Activated CD8-positive, alpha-beta T cell treated with anti-CD3 and anti-CD28 coated beads, Interleukin-2, amount 10 ng/mL, durations not matched to agents 7 days and 5 days (primary cell): ENCODE measurements at regions of chr17 and their contacts with region 1.

Region 1: DNA sequence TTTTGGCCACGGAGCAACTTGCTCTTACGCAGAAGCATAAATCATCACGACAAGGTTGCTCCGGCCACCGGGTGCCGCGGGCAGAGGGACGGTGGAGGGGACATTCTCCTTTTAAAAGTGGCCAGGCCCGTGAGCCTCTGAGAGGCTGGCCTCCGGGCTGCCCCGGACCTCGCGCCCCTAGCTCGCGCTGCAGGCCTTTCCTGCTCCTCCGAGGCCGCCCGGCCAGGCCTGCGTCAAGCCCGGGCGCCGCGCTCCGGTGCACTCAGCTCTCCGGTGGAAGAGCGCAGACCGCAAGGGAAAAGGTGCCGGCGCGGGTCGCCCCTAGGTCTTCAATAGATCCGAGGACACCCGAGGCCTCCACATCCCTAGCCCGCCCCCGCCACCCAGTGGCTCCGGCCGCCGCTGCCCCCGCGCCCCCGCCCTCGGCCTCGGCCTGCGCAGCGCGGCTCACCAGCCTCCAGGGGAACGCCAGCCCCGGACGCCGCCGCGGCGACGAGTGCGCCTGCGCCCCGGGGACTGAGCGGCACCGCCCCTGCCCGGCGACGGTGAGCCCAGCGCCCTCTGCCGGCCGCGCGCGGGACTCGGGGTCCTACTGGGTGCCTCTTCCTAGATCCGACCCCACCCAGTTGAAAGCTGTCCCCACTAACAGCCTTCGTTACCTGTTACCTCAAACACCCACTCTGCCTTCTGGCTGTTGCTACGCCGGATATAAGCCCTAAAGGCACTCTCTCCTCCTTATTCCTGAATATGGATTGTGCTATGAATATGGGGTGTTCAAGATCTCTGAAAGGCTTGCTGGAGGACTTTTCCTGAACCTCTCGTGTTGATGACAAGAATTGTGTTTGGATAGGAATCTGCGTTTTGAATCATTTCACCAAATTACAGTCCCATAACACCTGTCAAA is at the start of gene LYRM9:
- DNase-seq: peak; percentile 93
- ATAC-seq: peak; percentile 99
- H3K4me3 Mint-ChIP-seq: peak within 1 kb of the TSS; percentile 77
- H3K27ac Mint-ChIP-seq: peak within 1 kb of the TSS; percentile 49
- H3K4me1 Mint-ChIP-seq: peaks cover 23% of the 10 kb centered on the region
- H3K27me3 Mint-ChIP-seq: peaks cover 22% of the 10 kb centered on the region
- total RNA-seq, gene LYRM9: 1.6 to 3.6 TPM

Region 2: DNA sequence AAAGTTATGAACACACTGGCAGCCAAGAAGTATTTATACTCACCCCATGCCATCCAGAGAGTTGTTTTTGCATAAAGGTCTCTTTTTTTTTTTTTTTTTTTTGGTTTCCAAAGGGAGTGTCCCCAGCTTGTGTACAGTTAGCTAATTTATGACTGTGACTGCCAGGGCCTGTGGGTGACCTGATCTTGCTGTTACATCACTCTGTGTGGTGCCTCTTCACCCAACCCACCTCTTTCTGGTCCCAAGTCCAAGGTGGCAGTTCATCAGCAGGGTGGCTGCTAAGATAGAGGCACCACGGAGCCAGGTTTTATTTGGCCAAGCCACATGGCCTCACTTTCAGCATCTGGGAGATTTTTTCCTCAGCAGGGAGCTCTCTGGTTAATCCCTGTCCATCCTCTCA is 92.6 kb before region 1 on chr17 and contains the start of gene NOS2:
- CTCF ChIA-PET with region 1: interaction called, 198 read pairs
- POLR2A ChIA-PET with region 1: interaction called, 37 read pairs
- DNase-seq: no peak
- ATAC-seq: no peak
- H3K4me3 Mint-ChIP-seq: no peak within 1 kb of the TSS
- H3K27ac Mint-ChIP-seq: no peak within 1 kb of the TSS
- H3K4me1 Mint-ChIP-seq: peaks cover 3% of the 10 kb centered on the region
- H3K27me3 Mint-ChIP-seq: peaks cover 19% of the 10 kb centered on the region
- total RNA-seq, gene NOS2: not detected

Region 3: GRCh38 chr17:27985306-27985705 is 92.2 kb after region 1 on chr17:
- CTCF ChIA-PET with region 1: no interaction called
- POLR2A ChIA-PET with region 1: no interaction called
- DNase-seq: no peak
- ATAC-seq: no peak
- H3K4me3 Mint-ChIP-seq: no peak overlapping the region
- H3K27ac Mint-ChIP-seq: no peak overlapping the region
- H3K4me1 Mint-ChIP-seq: no peaks in the 10 kb centered on the region
- H3K27me3 Mint-ChIP-seq: peaks cover 20% of the 10 kb centered on the region

Region 4: DNA sequence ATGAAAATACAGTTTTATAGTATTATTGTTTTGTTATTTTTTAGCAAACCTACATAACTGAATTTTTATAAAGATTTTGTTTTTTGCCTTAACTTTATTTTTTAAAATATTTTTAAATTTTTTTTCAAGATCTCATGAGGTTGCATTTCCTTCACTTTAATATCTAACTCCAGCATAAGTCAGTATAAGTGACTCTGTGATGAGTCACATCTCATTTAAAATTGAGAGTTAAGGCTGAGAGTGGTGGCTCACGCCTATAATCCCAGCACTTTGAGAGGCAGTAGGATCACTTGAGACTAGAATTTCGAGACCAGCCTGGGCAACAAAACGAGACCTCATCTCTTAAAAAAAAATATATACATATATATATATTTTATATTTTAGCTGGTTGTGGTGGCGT is 193.4 kb after region 1 on chr17:
- CTCF ChIA-PET with region 1: no interaction called
- POLR2A ChIA-PET with region 1: no interaction called
- DNase-seq: no peak
- ATAC-seq: no peak
- H3K4me3 Mint-ChIP-seq: no peak overlapping the region
- H3K27ac Mint-ChIP-seq: no peak overlapping the region
- H3K4me1 Mint-ChIP-seq: no peaks in the 10 kb centered on the region
- H3K27me3 Mint-ChIP-seq: no peaks in the 10 kb centered on the region

Region 5: DNA sequence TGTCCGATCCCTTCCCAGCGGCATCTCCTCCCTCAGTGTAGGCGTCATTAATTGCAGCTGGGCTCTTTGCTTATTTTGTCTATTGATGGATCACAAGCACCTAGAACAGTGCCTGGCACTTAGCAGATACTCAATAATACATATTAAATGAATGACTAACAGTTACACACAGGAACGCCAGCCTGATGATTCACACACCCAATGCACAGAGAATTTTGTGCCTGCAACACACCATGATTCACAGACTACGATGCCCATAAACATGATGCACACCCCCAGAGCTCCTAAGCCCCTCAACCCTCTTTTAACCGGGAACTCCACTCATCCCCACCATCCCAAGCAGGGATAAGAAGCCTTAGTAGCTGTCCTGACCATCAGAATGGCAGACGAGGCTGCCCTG is 359.3 kb after region 1 on chr17:
- CTCF ChIA-PET with region 1: interaction called, 12 read pairs
- POLR2A ChIA-PET with region 1: no interaction called
- DNase-seq: no peak
- ATAC-seq: no peak
- H3K4me3 Mint-ChIP-seq: no peak overlapping the region
- H3K27ac Mint-ChIP-seq: no peak overlapping the region
- H3K4me1 Mint-ChIP-seq: peaks cover 8% of the 10 kb centered on the region
- H3K27me3 Mint-ChIP-seq: peaks cover 11% of the 10 kb centered on the region